Esophagus squamous epithelium (tissue), 5 donors: ENCODE measurements at regions of chr1 and their contacts with region 1.

Region 1: GRCh38 chr1:228734881-228735801 is at the start of gene RHOU:
- DNase-seq: no peak
- H3K4me3 ChIP-seq: peak within 1 kb of the TSS; percentile 63 to 97 (median 78)
- H3K27ac ChIP-seq: peak within 1 kb of the TSS; percentile 73 to 94 (median 82)
- H3K4me1 ChIP-seq: peaks cover 0 to 46% (median 10%) of the 10 kb centered on the region in 3 donors
- H3K27me3 ChIP-seq: peaks cover 0 to 35% (median 0%) of the 10 kb centered on the region in 4 donors
- CTCF ChIP-seq: peak; percentile 44 to 93 (median 88)
- POLR2A ChIP-seq: peak in 2 of 4 donors; percentile 61 to 67
- total RNA-seq, gene RHOU: 0.27 to 9.2 (median 2.5) TPM

Region 2: GRCh38 chr1:229156872-229157271 is 421.7 kb after region 1 on chr1:
- intact Hi-C with region 1: loop called (anchors 10 kb)
- DNase-seq: no peak
- H3K4me3 ChIP-seq: no peak overlapping the region
- H3K27ac ChIP-seq: peak overlapping the region in 1 of 4 donors; percentile 26
- H3K4me1 ChIP-seq: peaks cover 0 to 7% (median 0%) of the 10 kb centered on the region in 3 donors
- H3K27me3 ChIP-seq: no peaks in the 10 kb centered on the region
- CTCF ChIP-seq: peak in 5 of 6 experiments; percentile 27 to 55 (median 47)
- POLR2A ChIP-seq: no peak

Region 3: DNA sequence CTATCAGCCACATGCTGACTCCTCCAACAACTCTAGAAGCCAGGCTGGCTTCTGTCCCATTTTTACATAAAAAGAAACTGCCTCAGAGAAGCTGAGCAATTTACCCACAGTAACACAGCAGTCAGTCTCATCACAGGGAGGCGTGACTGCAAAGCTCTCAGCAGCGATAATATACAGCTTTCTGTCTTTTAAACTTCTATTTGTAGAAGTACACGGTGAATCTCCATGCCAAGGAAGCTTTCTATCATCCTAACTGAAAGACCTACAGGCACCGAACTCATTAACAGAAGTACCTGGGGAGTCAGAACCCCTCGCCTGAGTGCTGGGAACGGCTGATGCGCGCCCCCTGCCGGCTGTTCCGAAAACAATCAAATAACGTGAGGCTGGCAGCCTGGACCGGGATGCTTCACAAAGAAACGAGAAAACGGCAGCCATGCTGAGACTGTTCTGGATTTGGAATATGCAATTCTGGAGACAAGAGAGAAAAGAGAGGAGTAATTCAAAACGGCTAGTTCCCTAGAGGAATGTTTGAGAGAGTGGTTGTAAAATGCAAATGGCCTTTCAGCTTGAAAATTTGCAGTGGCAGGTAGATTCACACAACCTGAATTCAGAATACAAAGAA is 492.3 kb after region 1 on chr1:
- intact Hi-C with region 1: loop called (anchors 5 kb)
- DNase-seq: no peak
- H3K4me3 ChIP-seq: no peak overlapping the region
- H3K27ac ChIP-seq: no peak overlapping the region
- H3K4me1 ChIP-seq: peaks cover 26 to 63% (median 43%) of the 10 kb centered on the region in 3 donors
- H3K27me3 ChIP-seq: no peaks in the 10 kb centered on the region
- CTCF ChIP-seq: peak; percentile 46 to 89 (median 88)
- POLR2A ChIP-seq: no peak

Region 4: DNA sequence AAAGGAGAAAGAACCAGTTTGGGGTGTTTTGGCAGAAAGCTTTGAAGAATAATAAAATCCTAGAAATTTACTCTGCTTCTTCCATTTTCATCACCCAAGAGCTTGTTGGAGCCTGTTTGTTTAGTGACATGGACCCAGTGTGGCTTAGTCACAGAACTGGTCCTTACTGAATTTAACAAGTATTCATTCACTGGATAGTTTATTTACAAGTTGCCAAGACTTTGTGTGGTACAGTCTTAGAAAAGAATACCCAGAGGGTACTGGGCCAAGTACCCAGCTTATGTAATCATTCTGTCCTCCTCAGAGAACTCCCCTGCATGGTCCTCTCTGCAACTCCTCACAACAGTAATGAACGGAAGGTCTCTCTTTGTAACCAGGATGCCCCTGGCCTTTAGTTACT is 552.1 kb after region 1 on chr1:
- intact Hi-C with region 1: no loop called
- DNase-seq: no peak
- H3K4me3 ChIP-seq: no peak overlapping the region
- H3K27ac ChIP-seq: peak overlapping the region in 1 of 4 donors; percentile 19
- H3K4me1 ChIP-seq: peaks cover 5 to 36% (median 9%) of the 10 kb centered on the region in 3 donors
- H3K27me3 ChIP-seq: no peaks in the 10 kb centered on the region
- CTCF ChIP-seq: no peak
- POLR2A ChIP-seq: no peak